ENCODE measurements at regions of chr5 and their contacts with region 1.

Region 1: GRCh38 chr5:14727428-14727865 is 62.9 kb downstream of the OTULIN start:
- DNase-seq: peak; percentile 75

Region 2: GRCh38 chr5:14071433-14071832 is 656.0 kb before region 1 on chr5:
- in situ Hi-C with region 1: no loop called
- DNase-seq: no peak

Region 3: DNA sequence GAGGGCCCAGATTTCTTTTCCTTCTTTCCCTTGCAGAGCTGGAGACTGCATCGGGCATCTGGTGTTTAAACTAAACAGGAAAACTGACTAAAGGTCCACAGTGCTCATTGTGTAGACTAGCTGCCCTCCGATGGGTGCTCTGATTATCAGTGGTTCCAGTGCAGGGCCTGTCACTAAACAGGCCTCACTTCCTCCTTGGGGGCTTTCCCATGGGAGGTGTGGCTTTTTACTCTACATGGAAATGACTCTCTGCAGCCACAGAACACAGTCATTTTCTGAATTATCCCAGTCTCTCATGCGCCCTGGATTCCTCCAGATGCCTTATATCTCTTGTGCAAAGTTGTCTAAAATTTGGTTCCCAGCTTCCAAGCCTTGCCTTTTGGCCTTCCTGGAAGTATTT is 385.1 kb before region 1 on chr5:
- in situ Hi-C with region 1: no loop called
- DNase-seq: no peak

Region 4: DNA sequence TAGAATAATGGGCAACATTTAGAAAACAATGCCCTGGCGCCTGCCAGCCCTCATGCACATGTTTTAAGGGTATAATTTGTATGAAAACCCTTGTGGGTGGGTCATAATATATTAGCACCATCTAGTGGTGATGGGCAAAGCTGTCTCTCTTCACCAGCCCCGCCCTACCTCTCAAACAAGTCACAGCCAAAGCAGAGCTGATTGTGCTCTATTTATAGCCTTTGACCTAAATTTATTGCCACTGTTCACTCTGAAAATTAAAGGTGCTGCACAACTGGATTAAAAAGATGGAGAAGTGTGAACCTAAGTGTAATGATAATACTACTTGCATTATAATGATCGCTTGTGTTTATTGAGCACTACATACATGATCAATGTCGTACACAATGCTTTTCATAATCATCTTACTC is 276.1 kb after region 1 on chr5:
- in situ Hi-C with region 1: loop called (anchors 25 kb)
- DNase-seq: peak; percentile 91

Measured in KBM-7 (cell line).